HEK293 (cell line): ENCODE measurements at regions of chr5 and their contacts with region 1.

Region 1: DNA sequence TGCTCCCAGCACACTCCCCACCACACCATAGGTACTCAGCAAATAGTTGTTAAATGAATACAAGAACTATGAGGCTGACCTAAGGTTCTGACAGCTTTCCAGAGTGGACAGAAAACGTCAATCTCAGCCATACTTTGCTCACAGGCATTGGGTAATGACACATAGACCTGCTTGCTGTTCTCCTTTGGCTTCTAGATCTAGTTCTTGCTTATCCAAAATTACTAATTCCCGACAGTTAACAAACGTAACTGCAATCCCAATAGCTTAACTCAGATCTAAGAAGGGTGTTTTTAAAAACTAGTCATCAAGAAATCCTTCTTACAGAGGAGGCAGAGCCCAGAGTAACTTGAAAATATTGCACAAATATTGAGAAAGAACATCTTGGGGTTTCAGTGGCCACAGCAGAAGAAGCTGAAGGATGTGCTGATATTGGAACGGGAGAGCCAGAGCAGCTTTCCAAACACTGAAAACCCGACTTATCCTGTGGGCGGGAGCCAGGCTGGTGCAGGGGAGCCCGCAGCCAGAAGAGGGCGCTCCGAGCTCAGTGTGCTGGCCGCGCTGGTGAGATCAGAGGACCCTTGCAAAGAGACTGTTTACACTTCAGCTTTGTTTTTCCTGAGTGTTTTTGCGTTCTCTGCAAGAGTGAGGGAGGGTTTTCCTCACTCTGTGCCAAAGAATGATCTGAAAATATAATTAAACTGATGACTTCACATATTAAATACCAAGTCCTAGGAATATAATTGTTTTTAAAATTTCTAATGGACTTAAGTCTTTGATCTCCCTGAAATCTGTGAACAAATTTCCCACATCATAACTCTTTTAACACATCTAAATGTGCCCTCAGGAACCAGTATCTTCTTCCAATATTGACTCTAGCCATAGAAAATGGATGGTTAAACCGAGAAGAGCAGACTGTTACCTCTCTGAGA is 30.3 kb downstream of the FGF1 start:
- H3K4me3 ChIP-seq: no peak overlapping the region
- H3K27ac ChIP-seq: no peak overlapping the region
- H3K4me1 ChIP-seq: no peaks in the 10 kb centered on the region
- CTCF ChIP-seq: peak; percentile 90

Region 2: DNA sequence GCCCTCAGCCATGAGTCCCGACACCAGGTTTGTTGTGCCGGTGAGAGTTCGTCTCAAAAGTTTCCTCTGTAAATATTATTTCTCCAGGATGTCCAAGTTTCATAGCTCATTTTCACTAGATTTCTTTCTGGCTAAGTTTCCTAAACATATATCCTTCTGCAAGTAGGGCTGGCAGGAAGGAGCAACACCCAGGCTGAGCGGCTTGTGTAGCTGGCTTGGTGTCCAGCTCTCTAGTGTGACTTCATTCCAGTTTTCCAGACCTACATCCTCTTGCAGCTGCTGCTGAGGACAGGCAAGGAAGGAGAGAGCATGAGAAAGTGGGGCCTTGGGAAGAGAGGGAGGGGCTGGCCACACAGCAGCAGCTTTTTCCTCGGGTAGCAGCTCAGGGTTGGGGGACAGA is 50.0 kb before region 1 on chr5:
- CTCF ChIA-PET with region 1: interaction called, 30 read pairs
- POLR2A ChIA-PET with region 1: no interaction called
- H3K4me3 ChIP-seq: no peak overlapping the region
- H3K27ac ChIP-seq: no peak overlapping the region
- H3K4me1 ChIP-seq: peaks cover 7% of the 10 kb centered on the region
- CTCF ChIP-seq: no peak

Region 3: GRCh38 chr5:142627383-142628255 is 28.0 kb before region 1 on chr5:
- CTCF ChIA-PET with region 1: interaction called, 10 read pairs
- POLR2A ChIA-PET with region 1: no interaction called
- H3K4me3 ChIP-seq: no peak overlapping the region
- H3K27ac ChIP-seq: no peak overlapping the region
- H3K4me1 ChIP-seq: no peaks in the 10 kb centered on the region
- CTCF ChIP-seq: no peak

Region 4: GRCh38 chr5:142671801-142672200 is 16.2 kb after region 1 on chr5:
- CTCF ChIA-PET with region 1: interaction called, 28 read pairs
- POLR2A ChIA-PET with region 1: no interaction called
- H3K4me3 ChIP-seq: no peak overlapping the region
- H3K27ac ChIP-seq: no peak overlapping the region
- H3K4me1 ChIP-seq: no peaks in the 10 kb centered on the region
- CTCF ChIP-seq: no peak

Region 5: GRCh38 chr5:142685418-142686209 is 30.0 kb after region 1 on chr5 and contains the start of gene FGF1:
- CTCF ChIA-PET with region 1: interaction called, 26 read pairs
- POLR2A ChIA-PET with region 1: interaction called, 4 read pairs
- H3K4me3 ChIP-seq: no peak within 1 kb of the TSS
- H3K27ac ChIP-seq: no peak within 1 kb of the TSS
- H3K4me1 ChIP-seq: no peaks in the 10 kb centered on the region; the same call in 1 of the 2 replicates
- CTCF ChIP-seq: no peak

Region 6: DNA sequence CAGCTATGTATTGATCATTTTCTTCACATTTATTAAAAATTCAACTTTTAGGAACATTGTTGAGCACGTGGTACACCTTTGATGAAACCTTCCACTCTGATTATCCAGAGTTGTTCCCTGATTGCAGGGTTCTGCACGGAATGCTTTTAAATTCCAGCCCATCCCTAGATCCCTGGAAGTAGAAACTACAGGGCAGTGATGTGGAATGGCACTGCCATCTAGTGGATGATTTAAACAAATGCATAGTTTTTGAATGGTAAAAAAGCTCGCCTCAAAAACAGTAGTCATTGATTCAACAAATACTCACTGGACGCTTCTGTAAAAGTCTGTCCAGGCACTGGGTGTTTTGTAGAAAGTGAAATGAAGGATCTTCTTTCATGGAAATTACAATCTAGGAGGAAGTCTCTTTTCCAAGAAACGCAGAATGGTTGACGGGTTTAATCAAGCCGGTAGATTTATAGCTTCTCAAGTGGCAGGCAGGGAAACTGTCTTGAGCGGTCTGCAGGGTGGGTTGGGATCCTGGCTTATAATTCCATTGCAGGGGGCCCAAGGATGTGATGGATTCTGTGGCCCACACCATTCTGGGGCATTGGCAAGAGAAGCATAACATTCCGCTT is 233.0 kb after region 1 on chr5:
- CTCF ChIA-PET with region 1: interaction called, 11 read pairs
- POLR2A ChIA-PET with region 1: no interaction called
- H3K4me3 ChIP-seq: no peak overlapping the region
- H3K27ac ChIP-seq: no peak overlapping the region
- H3K4me1 ChIP-seq: no peaks in the 10 kb centered on the region
- CTCF ChIP-seq: peak; percentile 26; the same call in 1 of the 2 replicates